ENCODE measurements at regions of chr1 and their contacts with region 1.

Region 1: DNA sequence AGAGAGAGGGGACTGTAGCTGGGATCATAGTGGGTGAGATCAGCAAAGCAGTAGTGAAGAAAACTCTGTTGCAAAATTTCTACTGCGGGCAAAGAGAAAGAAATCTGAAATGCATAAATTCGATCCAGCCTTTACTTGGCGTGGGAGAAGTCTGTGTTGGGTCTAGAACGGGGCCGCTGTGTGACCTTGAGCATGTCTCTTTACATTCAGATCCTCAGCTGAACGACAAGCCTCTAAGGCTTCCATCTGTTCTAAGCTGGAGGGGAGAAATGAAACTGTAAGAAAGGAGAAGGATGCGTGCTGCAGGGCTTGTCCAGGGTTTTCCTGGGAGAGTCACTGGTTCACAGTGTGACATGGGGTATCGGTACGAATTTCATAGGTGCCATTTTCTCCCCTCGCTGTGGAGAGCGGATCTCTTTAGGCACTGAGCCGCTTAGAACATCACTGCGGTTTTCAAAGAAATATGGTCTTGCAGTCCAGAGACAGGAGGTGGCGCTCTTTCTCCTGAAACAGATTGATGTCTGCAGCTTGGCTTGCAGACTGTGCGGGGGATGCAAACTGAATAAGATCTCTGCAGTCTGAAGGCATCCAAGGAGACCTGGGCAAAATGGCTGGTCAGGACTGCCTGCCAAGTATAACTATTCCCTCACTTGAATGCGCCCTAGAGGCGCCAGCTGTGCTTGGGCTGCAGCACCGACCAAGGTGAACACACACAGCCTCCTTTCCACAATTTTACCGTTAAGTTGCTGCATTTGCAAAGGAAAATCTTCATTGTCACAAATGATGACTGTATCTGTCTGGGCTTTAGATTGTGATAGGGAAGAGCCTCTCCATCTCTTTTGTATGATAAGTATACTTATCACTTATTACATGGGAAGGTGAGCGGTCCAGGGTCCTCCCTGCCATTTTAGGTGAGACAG is 104.1 kb downstream of the XCL2 start:
- DNase-seq: peak; percentile 80 to 84 (median 82)
- H3K4me3 ChIP-seq: peak overlapping the region in 1 of 2 donors; percentile 46
- H3K4me3 Mint-ChIP-seq: peak overlapping the region; percentile 66 to 92 (median 82)
- H3K27ac ChIP-seq: no peak overlapping the region
- H3K27ac Mint-ChIP-seq: peak overlapping the region; percentile 70 to 93 (median 88)
- H3K4me1 ChIP-seq: peaks cover 51% of the 10 kb centered on the region
- H3K4me1 Mint-ChIP-seq: peaks cover 34 to 69% (median 46%) of the 10 kb centered on the region in 4 donors
- H3K27me3 ChIP-seq: no peaks in the 10 kb centered on the region
- H3K27me3 Mint-ChIP-seq: no peaks in the 10 kb centered on the region

Region 2: GRCh38 chr1:168386949-168387586 is 52.6 kb before region 1 on chr1:
- CTCF ChIA-PET with region 1: interaction called, 35 read pairs
- POLR2A ChIA-PET with region 1: interaction called, 5 read pairs
- intact Hi-C with region 1: no loop called
- DNase-seq: peak; percentile 73 to 85 (median 77)
- H3K4me3 ChIP-seq: peak overlapping the region in 1 of 2 donors; percentile 41
- H3K4me3 Mint-ChIP-seq: peak overlapping the region; percentile 59 to 87 (median 71)
- H3K27ac ChIP-seq: no peak overlapping the region
- H3K27ac Mint-ChIP-seq: peak overlapping the region; percentile 84 to 98 (median 94)
- H3K4me1 ChIP-seq: peaks cover 18% of the 10 kb centered on the region
- H3K4me1 Mint-ChIP-seq: peaks cover 11 to 35% (median 25%) of the 10 kb centered on the region in 4 donors
- H3K27me3 ChIP-seq: no peaks in the 10 kb centered on the region
- H3K27me3 Mint-ChIP-seq: peaks cover 0 to 2% of the 10 kb centered on the region in 2 donors

Region 3: DNA sequence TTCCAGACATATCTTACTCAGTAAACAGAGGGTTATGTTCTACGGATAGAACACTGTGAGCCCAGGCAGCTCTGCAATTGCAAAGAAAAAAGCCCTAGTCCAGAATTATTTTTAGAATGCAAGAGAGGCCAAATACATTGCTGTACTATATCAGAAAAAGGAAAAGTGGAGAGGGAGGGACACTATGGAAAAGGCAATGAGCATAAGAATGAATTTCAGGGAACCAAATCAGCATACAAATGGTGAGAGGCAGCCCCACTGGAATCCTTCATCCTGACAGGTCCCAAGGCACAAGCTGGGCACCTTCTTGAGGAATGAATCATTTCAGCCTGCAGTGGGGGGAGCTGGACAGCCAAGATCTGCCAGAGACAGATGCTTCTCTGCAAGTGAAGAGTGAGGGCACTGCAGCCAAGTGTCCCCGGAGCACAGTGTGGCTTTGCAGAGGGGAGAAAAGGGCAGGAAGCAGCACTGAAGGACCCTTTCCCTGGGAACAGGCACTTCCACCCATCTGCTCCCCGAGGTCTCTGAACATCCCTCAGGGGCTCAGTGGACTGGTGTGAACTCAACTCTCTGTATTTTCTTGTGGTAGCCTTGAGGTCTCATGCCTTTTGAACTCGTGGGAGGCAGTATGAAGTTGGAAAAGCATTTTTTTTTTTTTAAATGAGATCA is 11.5 kb before region 1 on chr1:
- CTCF ChIA-PET with region 1: interaction called, 102 read pairs
- POLR2A ChIA-PET with region 1: interaction called, 20 read pairs
- intact Hi-C with region 1: no loop called
- DNase-seq: no peak
- H3K4me3 ChIP-seq: no peak overlapping the region
- H3K4me3 Mint-ChIP-seq: no peak overlapping the region
- H3K27ac ChIP-seq: no peak overlapping the region
- H3K27ac Mint-ChIP-seq: peak overlapping the region in 1 of 7 donors; percentile 10
- H3K4me1 ChIP-seq: no peaks in the 10 kb centered on the region
- H3K4me1 Mint-ChIP-seq: peaks cover 3 to 6% (median 4%) of the 10 kb centered on the region in 4 donors
- H3K27me3 ChIP-seq: no peaks in the 10 kb centered on the region
- H3K27me3 Mint-ChIP-seq: peaks cover 0 to 1% of the 10 kb centered on the region in 2 donors

Region 4: GRCh38 chr1:168535536-168535935 is 95.8 kb after region 1 on chr1:
- CTCF ChIA-PET with region 1: interaction called, 13 read pairs
- POLR2A ChIA-PET with region 1: interaction called, 22 read pairs
- intact Hi-C with region 1: loop called (anchors 1 kb)
- DNase-seq: peak; percentile 47 to 63 (median 57)
- H3K4me3 ChIP-seq: peak overlapping the region in 1 of 2 donors; percentile 16
- H3K4me3 Mint-ChIP-seq: peak overlapping the region; percentile 34 to 84 (median 72)
- H3K27ac ChIP-seq: no peak overlapping the region
- H3K27ac Mint-ChIP-seq: peak overlapping the region; percentile 45 to 93 (median 78)
- H3K4me1 ChIP-seq: peaks cover 66% of the 10 kb centered on the region
- H3K4me1 Mint-ChIP-seq: peaks cover 53 to 87% (median 69%) of the 10 kb centered on the region in 4 donors
- H3K27me3 ChIP-seq: no peaks in the 10 kb centered on the region
- H3K27me3 Mint-ChIP-seq: no peaks in the 10 kb centered on the region

Region 5: GRCh38 chr1:168582693-168583336 is 143.1 kb after region 1 on chr1:
- CTCF ChIA-PET with region 1: interaction called, 12 read pairs
- POLR2A ChIA-PET with region 1: no interaction called
- intact Hi-C with region 1: no loop called
- DNase-seq: no peak
- H3K4me3 ChIP-seq: no peak overlapping the region
- H3K4me3 Mint-ChIP-seq: no peak overlapping the region
- H3K27ac ChIP-seq: no peak overlapping the region
- H3K27ac Mint-ChIP-seq: no peak overlapping the region
- H3K4me1 ChIP-seq: no peaks in the 10 kb centered on the region
- H3K4me1 Mint-ChIP-seq: peaks cover 0 to 6% (median under 1%) of the 10 kb centered on the region in 4 donors
- H3K27me3 ChIP-seq: no peaks in the 10 kb centered on the region
- H3K27me3 Mint-ChIP-seq: no peaks in the 10 kb centered on the region

Region 6: DNA sequence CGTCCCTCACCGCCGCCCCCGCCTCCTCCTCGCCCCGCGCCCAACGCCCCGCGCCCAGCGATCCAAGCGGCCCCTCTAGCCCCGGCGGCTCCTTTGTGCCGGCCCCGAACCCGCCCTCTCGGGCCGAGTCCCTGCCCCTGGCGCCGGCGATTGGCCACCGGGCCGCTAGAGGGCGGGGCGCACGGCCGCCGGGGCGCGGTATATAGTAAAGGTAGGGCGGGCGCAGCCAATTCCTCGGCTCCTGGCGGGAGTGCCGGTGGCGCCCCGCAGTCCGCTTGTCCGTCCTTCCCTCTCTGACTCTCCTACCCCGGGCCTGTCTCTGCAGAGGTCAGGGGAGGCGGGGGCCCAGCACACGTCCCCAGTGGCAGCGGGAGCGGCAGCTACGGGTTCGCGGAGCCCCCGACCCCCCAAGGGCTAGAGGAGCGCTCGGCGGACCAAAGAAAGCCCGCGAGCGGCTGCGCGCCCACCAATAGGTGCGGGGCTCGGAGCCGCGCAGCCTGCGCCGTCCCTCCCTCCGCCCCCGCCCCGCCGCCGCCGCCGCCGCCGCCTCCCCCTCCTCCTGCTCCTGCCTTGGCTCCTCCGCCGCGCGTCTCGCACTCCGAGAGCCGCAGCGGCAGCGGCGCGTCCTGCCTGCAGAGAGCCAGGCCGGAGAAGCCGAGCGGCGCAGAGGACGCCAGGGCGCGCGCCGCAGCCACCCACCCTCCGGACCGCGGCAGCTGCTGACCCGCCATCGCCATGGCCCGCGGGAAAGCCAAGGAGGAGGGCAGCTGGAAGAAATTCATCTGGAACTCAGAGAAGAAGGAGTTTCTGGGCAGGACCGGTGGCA is 666.6 kb after region 1 on chr1 and contains the start of gene ATP1B1:
- CTCF ChIA-PET with region 1: interaction called, 3 read pairs
- POLR2A ChIA-PET with region 1: no interaction called
- intact Hi-C with region 1: loop called (anchors 2 kb)
- DNase-seq: peak; percentile 72 to 84 (median 78)
- H3K4me3 ChIP-seq: peak within 1 kb of the TSS; percentile 57 to 70
- H3K4me3 Mint-ChIP-seq: peak within 1 kb of the TSS; percentile 78 to 97 (median 90)
- H3K27ac ChIP-seq: peak within 1 kb of the TSS; percentile 23
- H3K27ac Mint-ChIP-seq: peak within 1 kb of the TSS; percentile 58 to 88 (median 78)
- H3K4me1 ChIP-seq: peaks cover 27% of the 10 kb centered on the region
- H3K4me1 Mint-ChIP-seq: peaks cover 20 to 49% (median 34%) of the 10 kb centered on the region in 4 donors
- H3K27me3 ChIP-seq: no peaks in the 10 kb centered on the region
- H3K27me3 Mint-ChIP-seq: peaks cover 2 to 4% of the 10 kb centered on the region in 2 donors
- total RNA-seq, gene ATP1B1: 3.3 to 3.5 TPM

Measured in CD4-positive, alpha-beta memory T cell (primary cell).